CD4-positive, alpha-beta T cell (primary cell): ENCODE measurements at regions of chr6 and their contacts with region 1.

Region 1: DNA sequence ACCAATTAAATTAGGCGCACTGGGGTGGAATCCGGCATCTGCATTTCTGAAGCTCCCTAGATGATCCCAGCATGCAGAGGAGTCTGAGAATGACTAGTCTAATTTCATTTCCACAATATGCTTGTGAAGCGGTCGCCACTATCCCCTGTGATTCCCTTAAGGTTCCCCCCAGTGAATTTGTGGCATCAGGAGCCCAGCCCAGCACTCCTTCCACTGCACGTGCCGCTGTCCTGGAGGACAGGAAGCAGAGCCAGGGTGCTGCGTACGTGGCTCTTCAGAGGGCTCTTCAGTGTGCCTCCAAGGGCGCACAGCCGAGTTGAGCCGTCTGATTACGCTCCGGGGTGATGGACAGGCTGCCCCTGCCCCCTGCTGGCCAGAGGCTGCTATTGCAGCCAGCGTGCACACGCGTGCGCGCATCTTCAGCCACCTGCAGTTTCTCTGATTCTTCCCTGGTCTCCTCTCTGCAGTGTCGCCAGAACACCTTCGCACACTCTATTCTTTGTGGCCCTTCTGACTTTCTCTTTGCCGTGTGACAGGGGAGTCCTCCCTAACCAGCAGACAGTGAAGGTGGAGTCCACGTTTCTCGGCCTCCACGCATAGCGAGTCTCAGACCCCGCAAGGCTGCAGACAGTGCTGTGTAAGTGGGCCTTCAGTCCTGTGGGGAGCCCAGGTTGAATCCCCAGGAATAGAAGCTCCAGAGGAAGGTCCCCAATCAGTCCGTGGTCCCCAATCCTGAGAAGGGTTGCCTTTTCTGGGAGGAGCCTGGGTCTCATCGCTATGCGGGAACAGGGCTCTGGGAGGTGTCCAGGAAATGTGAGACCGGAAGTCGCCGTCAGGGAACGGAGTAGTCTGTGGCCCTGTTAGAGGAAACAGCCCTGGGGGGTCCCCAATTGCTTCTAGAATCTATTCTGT is 16.5 kb upstream of the NCR2 start:
- DNase-seq: peak; percentile 69 to 91 (median 80)
- ATAC-seq: peak; percentile 100
- H3K4me3 ChIP-seq: peak overlapping the region; percentile 35
- H3K4me3 Mint-ChIP-seq: peak overlapping the region; percentile 58
- H3K27ac ChIP-seq: no peak overlapping the region
- H3K27ac Mint-ChIP-seq: peak overlapping the region; percentile 14
- H3K4me1 ChIP-seq: peaks cover 15% of the 10 kb centered on the region
- H3K4me1 Mint-ChIP-seq: peaks cover 18% of the 10 kb centered on the region
- H3K27me3 ChIP-seq: no peaks in the 10 kb centered on the region
- H3K27me3 Mint-ChIP-seq: peaks cover 14% of the 10 kb centered on the region
- CTCF ChIP-seq: peak; percentile 98

Region 2: GRCh38 chr6:41072676-41073623 is 246.0 kb before region 1 on chr6 and contains the start of gene NFYA:
- CTCF ChIA-PET with region 1: no interaction called
- POLR2A ChIA-PET with region 1: no interaction called
- intact Hi-C with region 1: loop called (anchors 5 kb)
- DNase-seq: peak in 13 of 14 experiments; percentile 100
- ATAC-seq: peak; percentile 62
- H3K4me3 ChIP-seq: peak within 1 kb of the TSS; percentile 70
- H3K4me3 Mint-ChIP-seq: peak within 1 kb of the TSS; percentile 93
- H3K27ac ChIP-seq: peak within 1 kb of the TSS; percentile 95 to 96
- H3K27ac Mint-ChIP-seq: peak within 1 kb of the TSS; percentile 88
- H3K4me1 ChIP-seq: peaks cover 23% of the 10 kb centered on the region
- H3K4me1 Mint-ChIP-seq: peaks cover 51% of the 10 kb centered on the region
- H3K27me3 ChIP-seq: no peaks in the 10 kb centered on the region
- H3K27me3 Mint-ChIP-seq: no peaks in the 10 kb centered on the region
- CTCF ChIP-seq: peak; percentile 33
- total RNA-seq, gene NFYA: 26.7 to 27.3 TPM

Region 3: DNA sequence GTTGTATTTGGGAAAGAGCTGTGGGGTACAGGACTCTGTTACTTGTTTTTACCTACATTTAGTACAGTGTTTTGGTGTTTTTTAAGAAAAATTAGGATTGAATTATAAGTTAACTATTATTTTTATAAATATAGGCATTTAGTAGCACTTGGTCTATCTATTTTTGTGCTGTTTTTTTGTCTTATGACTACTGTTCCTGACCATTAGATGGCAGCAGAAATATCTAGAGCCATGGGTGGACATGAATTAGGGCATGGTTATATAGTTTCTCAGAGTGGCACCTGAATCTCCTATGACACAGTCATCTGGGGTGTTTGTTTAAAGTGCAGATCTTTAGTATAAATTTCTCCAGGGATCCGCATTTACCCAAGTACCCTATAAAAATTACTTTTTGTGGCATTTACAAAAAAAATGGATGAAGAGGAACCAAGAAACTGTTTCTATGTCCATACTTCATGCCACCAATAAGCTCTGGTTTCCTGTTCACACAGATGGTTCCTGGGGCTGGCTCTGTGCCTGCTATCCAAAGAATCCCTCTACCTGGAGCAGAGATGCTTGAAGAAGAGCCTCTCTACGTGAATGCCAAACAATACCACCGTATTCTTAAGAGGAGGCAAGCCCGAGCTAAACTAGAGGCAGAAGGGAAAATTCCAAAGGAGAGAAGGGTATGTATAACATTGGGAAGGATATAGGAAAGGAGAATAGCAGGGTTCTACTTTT is 226.3 kb before region 1 on chr6:
- CTCF ChIA-PET with region 1: no interaction called
- POLR2A ChIA-PET with region 1: no interaction called
- intact Hi-C with region 1: loop called in 1 of 2 experiments (anchors 5 kb)
- DNase-seq: peak in 3 of 14 experiments; percentile 14 to 28 (median 27)
- ATAC-seq: no peak
- H3K4me3 ChIP-seq: no peak overlapping the region
- H3K4me3 Mint-ChIP-seq: no peak overlapping the region
- H3K27ac ChIP-seq: no peak overlapping the region
- H3K27ac Mint-ChIP-seq: no peak overlapping the region
- H3K4me1 ChIP-seq: no peaks in the 10 kb centered on the region
- H3K4me1 Mint-ChIP-seq: peaks cover 6% of the 10 kb centered on the region
- H3K27me3 ChIP-seq: no peaks in the 10 kb centered on the region
- H3K27me3 Mint-ChIP-seq: no peaks in the 10 kb centered on the region
- CTCF ChIP-seq: peak; percentile 11

Region 4: GRCh38 chr6:41191569-41191968 is 127.3 kb before region 1 on chr6:
- CTCF ChIA-PET with region 1: no interaction called
- POLR2A ChIA-PET with region 1: no interaction called
- intact Hi-C with region 1: loop called (anchors 5 kb)
- DNase-seq: peak in 8 of 14 experiments; percentile 14 to 59 (median 25)
- ATAC-seq: no peak
- H3K4me3 ChIP-seq: no peak overlapping the region
- H3K4me3 Mint-ChIP-seq: no peak overlapping the region
- H3K27ac ChIP-seq: no peak overlapping the region
- H3K27ac Mint-ChIP-seq: no peak overlapping the region
- H3K4me1 ChIP-seq: peaks cover 33% of the 10 kb centered on the region
- H3K4me1 Mint-ChIP-seq: peaks cover 53% of the 10 kb centered on the region
- H3K27me3 ChIP-seq: no peaks in the 10 kb centered on the region
- H3K27me3 Mint-ChIP-seq: no peaks in the 10 kb centered on the region
- CTCF ChIP-seq: peak; percentile 48

Region 5: GRCh38 chr6:41278699-41279405 is 40.1 kb before region 1 on chr6:
- CTCF ChIA-PET with region 1: interaction called, 3 read pairs
- POLR2A ChIA-PET with region 1: no interaction called
- intact Hi-C with region 1: loop called (anchors 1 kb)
- DNase-seq: peak; percentile 39 to 85 (median 56)
- ATAC-seq: peak; percentile 71
- H3K4me3 ChIP-seq: no peak overlapping the region
- H3K4me3 Mint-ChIP-seq: peak overlapping the region; percentile 18
- H3K27ac ChIP-seq: no peak overlapping the region
- H3K27ac Mint-ChIP-seq: no peak overlapping the region
- H3K4me1 ChIP-seq: peaks cover 6% of the 10 kb centered on the region
- H3K4me1 Mint-ChIP-seq: peaks cover 10% of the 10 kb centered on the region
- H3K27me3 ChIP-seq: no peaks in the 10 kb centered on the region
- H3K27me3 Mint-ChIP-seq: peaks cover 8% of the 10 kb centered on the region
- CTCF ChIP-seq: peak; percentile 46

Region 6: DNA sequence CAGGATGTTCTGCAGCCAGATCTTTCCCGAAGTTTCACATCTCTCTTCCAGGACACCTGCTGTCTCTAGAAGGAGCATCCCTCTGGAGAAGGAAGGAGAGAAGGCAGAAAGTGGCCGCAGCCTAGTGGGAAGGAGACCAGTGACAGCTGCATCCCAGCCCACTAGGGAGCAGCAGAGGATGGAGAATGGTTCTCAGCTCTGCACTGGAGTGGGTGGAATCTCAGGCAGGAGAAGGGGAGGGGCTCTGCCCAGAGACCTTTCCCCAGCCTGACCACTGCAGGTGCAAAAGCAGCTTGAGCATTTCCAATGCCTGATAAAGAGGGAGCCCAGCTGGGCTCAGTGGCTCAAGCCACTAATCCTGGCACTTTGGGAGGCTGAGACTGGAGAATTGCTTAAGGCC is 48.8 kb after region 1 on chr6:
- CTCF ChIA-PET with region 1: no interaction called
- POLR2A ChIA-PET with region 1: no interaction called
- intact Hi-C with region 1: loop called in 1 of 2 experiments (anchors 5 kb)
- DNase-seq: no peak
- ATAC-seq: no peak
- H3K4me3 ChIP-seq: no peak overlapping the region
- H3K4me3 Mint-ChIP-seq: no peak overlapping the region
- H3K27ac ChIP-seq: no peak overlapping the region
- H3K27ac Mint-ChIP-seq: no peak overlapping the region
- H3K4me1 ChIP-seq: peaks cover 26% of the 10 kb centered on the region
- H3K4me1 Mint-ChIP-seq: peaks cover 27% of the 10 kb centered on the region
- H3K27me3 ChIP-seq: peaks cover 42 to 56% of the 10 kb centered on the region in 2 experiments
- H3K27me3 Mint-ChIP-seq: peaks cover 72% of the 10 kb centered on the region
- CTCF ChIP-seq: no peak

Region 7: DNA sequence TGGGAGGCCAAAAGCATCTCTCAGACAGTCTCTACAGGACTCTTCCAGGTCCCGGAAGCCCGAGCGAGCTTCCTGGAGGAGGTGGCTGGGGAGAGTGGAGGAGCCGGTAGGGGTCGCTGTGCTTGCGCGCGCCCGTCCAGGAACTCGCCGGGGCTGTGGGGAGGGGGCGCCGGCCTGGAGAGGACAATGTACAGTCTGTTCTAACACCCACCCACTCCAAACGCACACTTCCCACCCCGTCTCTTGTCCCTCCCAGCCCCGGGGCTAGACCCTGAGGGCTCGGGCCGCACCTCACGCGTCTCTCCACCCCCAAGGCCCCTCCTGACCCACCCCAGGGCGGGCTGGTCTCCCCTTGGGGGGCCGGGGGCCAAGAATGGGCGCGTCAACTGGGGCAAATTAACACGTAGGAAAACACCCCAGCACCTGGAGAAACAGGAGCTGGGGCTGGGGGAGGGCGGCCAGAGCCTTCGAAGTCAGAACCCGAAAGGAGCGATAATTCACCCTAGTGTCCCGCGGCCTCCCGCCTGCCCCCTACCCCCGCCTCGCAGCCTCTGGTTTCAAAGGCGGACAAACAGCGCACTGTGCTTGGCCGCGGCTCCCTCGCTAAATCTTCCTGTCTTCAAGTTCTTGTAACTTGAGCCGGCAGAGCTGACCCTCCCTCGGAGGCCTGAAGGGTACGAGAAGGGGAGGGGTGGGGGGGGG is 124.0 kb after region 1 on chr6:
- CTCF ChIA-PET with region 1: no interaction called
- POLR2A ChIA-PET with region 1: no interaction called
- intact Hi-C with region 1: no loop called
- DNase-seq: peak in 3 of 14 experiments; percentile 24 to 52 (median 37)
- ATAC-seq: no peak
- H3K4me3 ChIP-seq: no peak overlapping the region
- H3K4me3 Mint-ChIP-seq: no peak overlapping the region
- H3K27ac ChIP-seq: no peak overlapping the region
- H3K27ac Mint-ChIP-seq: no peak overlapping the region
- H3K4me1 ChIP-seq: peaks cover 49% of the 10 kb centered on the region
- H3K4me1 Mint-ChIP-seq: peaks cover 40% of the 10 kb centered on the region
- H3K27me3 ChIP-seq: peaks cover 6 to 8% of the 10 kb centered on the region in 2 experiments
- H3K27me3 Mint-ChIP-seq: peaks cover 21% of the 10 kb centered on the region
- CTCF ChIP-seq: no peak